ENCODE measurements at regions of chrX and their contacts with region 1.

Region 1: GRCh38 chrX:102950908-102951866 is 14.1 kb downstream of the RAB40AL start:
- DNase-seq: peak; percentile 11 to 48
- ATAC-seq: peak; percentile 95
- H3K4me3 ChIP-seq: peak overlapping the region; percentile 32
- H3K27ac ChIP-seq: no peak overlapping the region
- H3K4me1 ChIP-seq: no peaks in the 10 kb centered on the region
- CTCF ChIP-seq: peak; percentile 57
- EP300 ChIP-seq: no peak
- POLR2A ChIP-seq: no peak
- RAD21 ChIP-seq: peak; percentile 24 to 37; a peak in 2 of 5 replicates

Region 2: GRCh38 chrX:103175944-103176753 is 225.0 kb after region 1 on chrX:
- CTCF ChIA-PET with region 1: interaction called, 26 read pairs
- POLR2A ChIA-PET with region 1: no interaction called
- DNase-seq: peak; percentile 37 to 39
- ATAC-seq: peak; percentile 66 to 84; a peak in 4 of 6 replicates
- H3K4me3 ChIP-seq: peak overlapping the region; percentile 34
- H3K27ac ChIP-seq: no peak overlapping the region
- H3K4me1 ChIP-seq: no peaks in the 10 kb centered on the region
- CTCF ChIP-seq: peak; percentile 71
- EP300 ChIP-seq: no peak
- POLR2A ChIP-seq: no peak
- RAD21 ChIP-seq: peak; percentile 79 to 81

Region 3: GRCh38 chrX:104165894-104166737 is 1214.9 kb after region 1 on chrX and contains the start of gene FAM199X:
- CTCF ChIA-PET with region 1: no interaction called
- POLR2A ChIA-PET with region 1: no interaction called
- DNase-seq: peak; percentile 76 to 92
- ATAC-seq: peak; percentile 97 to 98
- H3K4me3 ChIP-seq: peak within 1 kb of the TSS; percentile 84
- H3K27ac ChIP-seq: peak within 1 kb of the TSS; percentile 84 to 98
- H3K4me1 ChIP-seq: peaks cover 25% of the 10 kb centered on the region; the same call in 2 of the 3 replicates
- CTCF ChIP-seq: peak; percentile 51
- EP300 ChIP-seq: no peak
- POLR2A ChIP-seq: peak; percentile 72
- RAD21 ChIP-seq: no peak
- polyA plus RNA-seq, gene FAM199X: 16.6 and 20.1 TPM in 2 replicates

Measured in A549 (cell line).